MCF 10A (cell line): ENCODE measurements at regions of chr14 and their contacts with region 1.

Region 1: GRCh38 chr14:65824285-65824977 is 411.9 kb downstream of the FUT8 start:
- DNase-seq: peak; percentile 70
- H3K4me3 Mint-ChIP-seq: no peak overlapping the region
- H3K27ac Mint-ChIP-seq: no peak overlapping the region
- H3K4me1 Mint-ChIP-seq: no peaks in the 10 kb centered on the region
- H3K27me3 Mint-ChIP-seq: peaks cover 34% of the 10 kb centered on the region
- CTCF ChIP-seq: peak; percentile 90

Region 2: GRCh38 chr14:65156568-65157366 is 667.7 kb before region 1 on chr14:
- CTCF ChIA-PET with region 1: interaction called, 11 read pairs
- POLR2A ChIA-PET with region 1: no interaction called
- intact Hi-C with region 1: no loop called
- DNase-seq: peak; percentile 61
- H3K4me3 Mint-ChIP-seq: no peak overlapping the region
- H3K27ac Mint-ChIP-seq: no peak overlapping the region
- H3K4me1 Mint-ChIP-seq: no peaks in the 10 kb centered on the region
- H3K27me3 Mint-ChIP-seq: no peaks in the 10 kb centered on the region
- CTCF ChIP-seq: no peak

Region 3: GRCh38 chr14:65169351-65169750 is 655.1 kb before region 1 on chr14:
- CTCF ChIA-PET with region 1: interaction called, 49 read pairs
- POLR2A ChIA-PET with region 1: interaction called, 4 read pairs
- intact Hi-C with region 1: loop called (anchors 1 kb)
- DNase-seq: no peak
- H3K4me3 Mint-ChIP-seq: no peak overlapping the region
- H3K27ac Mint-ChIP-seq: peak overlapping the region; percentile 80
- H3K4me1 Mint-ChIP-seq: peaks cover 21% of the 10 kb centered on the region
- H3K27me3 Mint-ChIP-seq: no peaks in the 10 kb centered on the region
- CTCF ChIP-seq: no peak

Region 4: GRCh38 chr14:65704850-65705249 is 119.6 kb before region 1 on chr14:
- CTCF ChIA-PET with region 1: interaction called, 3 read pairs
- POLR2A ChIA-PET with region 1: no interaction called
- intact Hi-C with region 1: loop called (anchors 5 kb)
- DNase-seq: no peak
- H3K4me3 Mint-ChIP-seq: no peak overlapping the region
- H3K27ac Mint-ChIP-seq: no peak overlapping the region
- H3K4me1 Mint-ChIP-seq: no peaks in the 10 kb centered on the region
- H3K27me3 Mint-ChIP-seq: no peaks in the 10 kb centered on the region
- CTCF ChIP-seq: no peak

Region 5: GRCh38 chr14:65910108-65910786 is 85.8 kb after region 1 on chr14:
- CTCF ChIA-PET with region 1: no interaction called
- POLR2A ChIA-PET with region 1: no interaction called
- intact Hi-C with region 1: no loop called
- DNase-seq: peak; percentile 72
- H3K4me3 Mint-ChIP-seq: no peak overlapping the region
- H3K27ac Mint-ChIP-seq: no peak overlapping the region
- H3K4me1 Mint-ChIP-seq: peaks cover 4% of the 10 kb centered on the region
- H3K27me3 Mint-ChIP-seq: peaks cover 46% of the 10 kb centered on the region
- CTCF ChIP-seq: no peak

Region 6: GRCh38 chr14:65958664-65959562 is 134.5 kb after region 1 on chr14:
- CTCF ChIA-PET with region 1: interaction called, 25 read pairs
- POLR2A ChIA-PET with region 1: no interaction called
- intact Hi-C with region 1: loop called (anchors 5 kb)
- DNase-seq: peak; percentile 50
- H3K4me3 Mint-ChIP-seq: no peak overlapping the region
- H3K27ac Mint-ChIP-seq: no peak overlapping the region
- H3K4me1 Mint-ChIP-seq: no peaks in the 10 kb centered on the region
- H3K27me3 Mint-ChIP-seq: peaks cover 6% of the 10 kb centered on the region
- CTCF ChIP-seq: peak; percentile 44